Calu3 (cell line): ENCODE measurements at regions of chrX and their contacts with region 1.

Region 1: DNA sequence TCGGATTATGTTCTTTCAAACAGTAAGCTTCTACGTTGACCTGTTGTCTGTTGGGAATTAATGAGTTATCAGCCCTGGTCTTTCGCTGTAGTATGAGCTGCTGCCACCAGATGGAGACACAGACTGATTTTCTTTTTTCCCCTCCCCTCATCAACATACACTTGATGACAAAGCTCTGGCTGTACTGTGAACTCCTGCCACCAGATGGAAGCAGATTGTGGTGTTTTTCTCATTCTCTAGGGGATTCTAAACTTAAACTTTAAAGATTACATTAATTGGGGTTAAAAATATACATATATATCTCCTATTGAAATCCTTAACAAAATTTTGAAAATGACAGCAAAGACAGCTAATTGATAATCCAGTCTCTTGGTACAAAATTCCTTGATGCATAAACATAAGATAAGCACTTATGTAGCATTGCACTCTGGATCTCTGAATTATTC is 44.8 kb downstream of the SMS start:
- DNase-seq: peak; percentile 66
- H3K4me3 Mint-ChIP-seq: no peak overlapping the region
- H3K27ac Mint-ChIP-seq: no peak overlapping the region
- H3K4me1 Mint-ChIP-seq: no peaks in the 10 kb centered on the region
- H3K27me3 Mint-ChIP-seq: no peaks in the 10 kb centered on the region
- CTCF ChIP-seq: peak; percentile 75

Region 2: DNA sequence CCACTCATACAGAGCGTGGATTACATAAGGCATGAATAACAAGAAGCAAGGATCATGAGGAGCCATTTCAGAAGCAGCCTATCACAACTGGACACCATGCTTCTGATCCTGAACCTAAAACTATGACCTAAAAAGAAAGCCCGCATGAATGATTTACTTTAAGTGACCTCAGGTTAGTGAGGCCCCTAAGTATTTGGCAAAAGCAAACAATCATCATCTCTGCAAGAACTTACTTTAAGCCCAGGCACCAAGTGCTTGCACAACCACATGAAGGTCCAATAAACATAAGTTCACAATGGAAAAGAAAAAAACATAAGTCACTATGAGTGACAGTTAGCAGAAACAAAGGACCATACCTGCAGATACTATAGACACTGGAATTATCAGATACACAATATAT is 153.9 kb before region 1 on chrX:
- CTCF ChIA-PET with region 1: no interaction called
- intact Hi-C with region 1: no loop called
- DNase-seq: no peak
- H3K4me3 Mint-ChIP-seq: no peak overlapping the region
- H3K27ac Mint-ChIP-seq: no peak overlapping the region
- H3K4me1 Mint-ChIP-seq: no peaks in the 10 kb centered on the region
- H3K27me3 Mint-ChIP-seq: no peaks in the 10 kb centered on the region
- CTCF ChIP-seq: no peak

Region 3: DNA sequence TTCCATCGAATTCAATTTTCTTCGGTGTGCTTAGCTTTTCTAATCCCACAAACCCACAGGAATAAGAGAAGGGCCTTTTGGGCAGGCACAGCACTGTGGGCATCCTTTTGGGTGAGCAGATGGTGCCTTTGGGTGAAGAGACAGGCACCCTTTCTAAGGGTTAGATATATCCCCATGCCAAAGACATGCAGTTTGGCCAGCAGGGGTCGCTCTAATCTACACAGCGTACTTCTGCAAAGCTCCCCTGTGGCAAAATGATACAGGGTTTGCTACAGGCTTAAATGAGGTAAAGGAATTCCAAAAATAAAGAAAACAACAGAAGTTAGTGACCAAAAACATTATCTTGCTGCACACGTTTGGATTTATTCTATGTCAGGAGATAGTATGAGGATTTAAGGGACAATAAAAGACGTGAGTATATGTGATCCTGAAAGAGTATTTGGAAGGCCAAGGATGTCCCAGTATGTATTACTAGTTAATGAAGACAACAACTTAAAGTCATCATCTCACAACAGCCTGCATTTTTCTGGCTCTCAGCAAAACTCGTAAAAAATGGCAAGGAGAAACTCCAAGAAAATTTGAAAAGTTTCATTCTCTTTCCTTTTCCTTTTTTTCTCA is 96.2 kb after region 1 on chrX:
- CTCF ChIA-PET with region 1: interaction called, 14 read pairs
- intact Hi-C with region 1: no loop called
- DNase-seq: peak; percentile 65
- H3K4me3 Mint-ChIP-seq: no peak overlapping the region
- H3K27ac Mint-ChIP-seq: no peak overlapping the region
- H3K4me1 Mint-ChIP-seq: peaks cover 8% of the 10 kb centered on the region
- H3K27me3 Mint-ChIP-seq: no peaks in the 10 kb centered on the region
- CTCF ChIP-seq: peak; percentile 51

Region 4: GRCh38 chrX:22122510-22122909 is 137.2 kb after region 1 on chrX:
- CTCF ChIA-PET with region 1: interaction called, 5 read pairs
- intact Hi-C with region 1: loop called (anchors 5 kb)
- DNase-seq: no peak
- H3K4me3 Mint-ChIP-seq: no peak overlapping the region
- H3K27ac Mint-ChIP-seq: no peak overlapping the region
- H3K4me1 Mint-ChIP-seq: peaks cover 16% of the 10 kb centered on the region
- H3K27me3 Mint-ChIP-seq: no peaks in the 10 kb centered on the region
- CTCF ChIP-seq: no peak

Region 5: GRCh38 chrX:22135994-22136684 is 150.8 kb after region 1 on chrX:
- CTCF ChIA-PET with region 1: interaction called, 22 read pairs
- intact Hi-C with region 1: loop called (anchors 1 kb)
- DNase-seq: peak; percentile 43
- H3K4me3 Mint-ChIP-seq: peak overlapping the region; percentile 27
- H3K27ac Mint-ChIP-seq: peak overlapping the region; percentile 66
- H3K4me1 Mint-ChIP-seq: peaks cover 28% of the 10 kb centered on the region
- H3K27me3 Mint-ChIP-seq: no peaks in the 10 kb centered on the region
- CTCF ChIP-seq: peak; percentile 23

Region 6: DNA sequence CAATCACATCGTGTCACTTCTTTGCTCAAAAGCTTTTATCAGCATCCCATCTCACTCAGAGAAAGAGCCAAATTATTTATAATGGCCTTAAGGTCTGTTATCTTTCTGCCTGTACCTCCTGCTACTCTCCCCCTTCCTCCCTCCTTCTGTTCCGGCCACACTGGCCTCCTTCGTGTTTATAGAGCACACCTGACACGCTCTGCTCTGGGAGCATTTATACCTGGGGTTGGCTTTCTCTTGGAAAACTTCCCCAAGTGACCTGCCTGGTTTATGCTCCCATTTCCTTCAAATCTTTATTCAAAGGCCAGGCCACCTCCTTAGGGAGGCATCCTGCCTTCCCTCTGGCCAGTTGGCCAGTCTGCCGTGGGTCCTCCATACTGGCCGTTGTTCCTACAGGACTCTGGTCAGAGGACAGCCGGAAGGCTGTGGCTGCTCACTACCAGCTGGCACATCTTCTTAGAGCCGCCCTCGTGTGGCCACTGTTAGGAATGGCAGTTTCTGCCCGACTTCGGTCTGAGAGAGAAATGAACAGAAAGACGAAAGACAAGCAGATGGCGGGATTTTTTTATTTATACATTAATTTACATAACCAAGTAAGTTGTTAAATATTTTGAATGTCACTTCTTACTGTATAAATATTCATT is 207.2 kb after region 1 on chrX:
- CTCF ChIA-PET with region 1: interaction called, 5 read pairs
- intact Hi-C with region 1: loop called (anchors 2 kb)
- DNase-seq: peak; percentile 68
- H3K4me3 Mint-ChIP-seq: peak overlapping the region; percentile 55
- H3K27ac Mint-ChIP-seq: peak overlapping the region; percentile 6
- H3K4me1 Mint-ChIP-seq: peaks cover 9% of the 10 kb centered on the region
- H3K27me3 Mint-ChIP-seq: no peaks in the 10 kb centered on the region
- CTCF ChIP-seq: peak; percentile 59

Region 7: GRCh38 chrX:22748093-22748999 is 763.0 kb after region 1 on chrX:
- CTCF ChIA-PET with region 1: interaction called, 7 read pairs
- intact Hi-C with region 1: loop called (anchors 10 kb)
- DNase-seq: peak; percentile 50
- H3K4me3 Mint-ChIP-seq: no peak overlapping the region
- H3K27ac Mint-ChIP-seq: no peak overlapping the region
- H3K4me1 Mint-ChIP-seq: no peaks in the 10 kb centered on the region
- H3K27me3 Mint-ChIP-seq: no peaks in the 10 kb centered on the region
- CTCF ChIP-seq: no peak

Region 8: DNA sequence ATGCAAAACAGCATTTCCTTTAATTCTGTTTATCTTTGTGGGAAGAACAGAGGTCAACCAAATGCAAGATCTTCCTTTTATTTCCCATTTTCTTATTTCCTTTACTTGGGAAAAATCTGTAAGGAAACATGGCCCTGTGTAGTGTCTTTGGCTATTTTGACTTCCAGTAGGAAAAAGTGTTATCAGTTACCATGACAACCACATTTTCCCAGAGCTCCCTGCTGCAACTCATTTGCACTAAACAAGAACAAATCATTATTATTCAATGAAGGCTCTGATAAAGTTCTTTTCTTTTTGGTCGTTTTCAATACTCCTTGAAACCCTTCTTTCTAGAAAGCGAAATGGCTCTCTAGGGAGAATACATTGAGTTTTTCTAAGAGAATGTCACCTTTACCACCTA is 897.2 kb after region 1 on chrX:
- CTCF ChIA-PET with region 1: no interaction called
- intact Hi-C with region 1: no loop called
- DNase-seq: no peak
- H3K4me3 Mint-ChIP-seq: no peak overlapping the region
- H3K27ac Mint-ChIP-seq: no peak overlapping the region
- H3K4me1 Mint-ChIP-seq: no peaks in the 10 kb centered on the region
- H3K27me3 Mint-ChIP-seq: no peaks in the 10 kb centered on the region
- CTCF ChIP-seq: no peak

Region 9: DNA sequence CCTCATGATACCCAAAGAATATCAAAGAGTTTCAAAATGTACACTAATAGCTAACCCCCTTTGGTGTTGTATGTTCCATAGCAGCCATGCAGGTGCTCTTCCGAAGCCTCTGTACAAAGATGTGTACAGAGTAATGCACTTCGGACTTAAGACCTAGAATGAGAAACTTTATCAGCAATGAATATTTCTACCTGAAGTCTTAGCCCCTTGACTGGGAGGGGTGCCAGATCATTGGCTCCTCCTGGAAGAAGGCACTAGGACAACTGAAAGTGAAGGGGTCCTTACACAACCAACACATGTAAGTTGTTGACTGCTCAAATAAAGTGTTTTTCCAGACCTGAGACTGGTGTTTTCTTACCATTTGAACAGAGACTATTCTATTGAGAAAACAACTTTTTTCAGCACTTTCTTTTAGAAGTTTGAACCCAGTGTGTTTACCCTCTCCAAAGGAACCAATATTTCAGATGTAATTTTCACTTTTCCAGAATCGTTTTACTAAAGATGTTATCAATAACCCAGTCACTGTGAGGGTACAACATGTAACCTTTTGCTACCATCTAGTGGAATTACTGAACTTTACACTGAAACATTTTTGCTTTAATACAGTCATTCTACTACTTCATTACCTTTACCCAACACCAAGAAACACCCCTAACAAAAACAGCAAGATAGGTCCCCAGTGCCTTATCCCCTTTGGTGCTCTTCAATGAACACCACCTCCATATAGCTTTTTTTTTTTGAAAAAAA is 1648.7 kb after region 1 on chrX:
- CTCF ChIA-PET with region 1: no interaction called
- intact Hi-C with region 1: loop called (anchors 10 kb)
- DNase-seq: no peak
- H3K4me3 Mint-ChIP-seq: no peak overlapping the region
- H3K27ac Mint-ChIP-seq: no peak overlapping the region
- H3K4me1 Mint-ChIP-seq: no peaks in the 10 kb centered on the region
- H3K27me3 Mint-ChIP-seq: peaks cover 59% of the 10 kb centered on the region
- CTCF ChIP-seq: no peak